CD4-positive, alpha-beta T cell (primary cell): ENCODE measurements at regions of chr15 and their contacts with region 1.

Region 1: DNA sequence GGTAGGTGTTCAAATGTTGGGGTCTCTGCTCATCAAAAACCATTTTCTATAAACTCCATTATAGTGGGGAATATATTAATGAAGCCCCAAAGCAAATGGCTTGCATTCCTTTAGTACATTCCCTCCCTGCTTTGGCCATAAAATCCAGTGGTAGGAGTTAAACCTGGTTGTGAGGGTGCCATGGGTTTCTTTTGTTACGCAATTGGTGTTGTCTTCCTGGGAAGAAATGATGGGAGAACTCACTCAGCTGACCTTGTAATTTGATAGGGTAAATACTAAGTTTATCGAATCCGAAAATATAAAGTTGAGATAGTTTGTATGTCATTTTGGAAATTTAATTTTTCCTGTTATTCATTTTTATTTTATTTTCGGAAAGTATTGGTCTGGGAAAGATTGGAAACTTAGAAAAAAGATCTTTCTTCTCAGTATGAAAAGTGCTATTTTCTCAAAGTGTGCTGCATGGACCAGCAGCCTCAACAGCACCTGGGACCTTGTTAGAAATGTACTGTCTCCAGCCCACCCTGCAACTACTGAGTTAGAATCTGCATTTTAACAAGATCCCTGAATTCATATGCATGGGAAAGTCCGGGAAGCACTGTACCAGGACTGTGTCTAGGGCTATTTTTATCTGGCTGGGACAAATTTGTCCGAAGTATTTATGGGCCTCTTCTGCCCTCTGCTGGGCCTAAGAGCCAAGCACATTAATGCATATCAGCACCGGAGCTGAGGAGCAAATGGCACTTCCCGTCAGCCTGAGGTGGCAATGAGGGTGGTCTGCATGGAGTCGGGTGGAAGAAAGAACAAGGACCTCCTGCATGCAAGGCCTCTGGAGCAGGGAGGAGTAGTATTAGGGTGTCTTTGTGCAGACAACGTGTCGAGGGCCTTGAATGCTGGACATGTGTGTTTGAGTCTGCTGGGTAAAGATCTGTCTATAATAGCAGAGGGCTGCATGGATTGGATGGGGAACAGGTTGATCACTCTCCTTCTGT is 54.7 kb downstream of the FAM81A start:
- DNase-seq: peak; percentile 30 to 79 (median 42)
- ATAC-seq: peak; percentile 79
- H3K4me3 ChIP-seq: no peak overlapping the region
- H3K4me3 Mint-ChIP-seq: no peak overlapping the region
- H3K27ac ChIP-seq: no peak overlapping the region
- H3K27ac Mint-ChIP-seq: no peak overlapping the region
- H3K4me1 ChIP-seq: peaks cover 5% of the 10 kb centered on the region
- H3K4me1 Mint-ChIP-seq: no peaks in the 10 kb centered on the region
- H3K27me3 ChIP-seq: no peaks in the 10 kb centered on the region
- H3K27me3 Mint-ChIP-seq: no peaks in the 10 kb centered on the region
- CTCF ChIP-seq: peak; percentile 95

Region 2: DNA sequence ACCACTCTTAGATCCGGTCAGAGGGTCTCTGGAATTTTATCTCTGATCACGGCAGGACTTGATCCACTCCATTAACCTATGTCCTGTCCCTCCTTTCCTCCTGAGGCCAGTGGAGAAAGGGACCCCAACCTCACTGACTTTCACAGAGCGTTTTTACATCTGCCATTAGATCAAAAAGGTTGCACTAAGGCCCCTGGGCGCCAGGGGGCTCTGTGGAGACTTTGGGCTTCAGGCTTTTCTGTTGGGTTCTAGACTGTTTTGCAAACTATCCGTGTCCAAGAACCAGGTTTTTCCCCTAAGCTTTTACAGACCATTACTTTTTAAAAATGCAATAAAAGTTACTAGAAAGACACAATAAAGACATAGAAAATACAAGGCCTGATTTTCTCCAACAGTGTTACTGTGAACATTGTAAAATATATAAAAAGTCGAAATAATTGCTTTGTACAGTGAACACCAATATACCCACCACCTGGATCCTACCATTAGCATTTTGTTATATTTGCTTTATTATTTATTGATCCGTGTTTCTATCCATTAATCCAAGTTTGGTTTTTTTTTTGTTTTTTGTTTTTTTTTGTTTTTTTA is 1626.4 kb before region 1 on chr15:
- CTCF ChIA-PET with region 1: no interaction called
- POLR2A ChIA-PET with region 1: no interaction called
- intact Hi-C with region 1: loop called in 1 of 2 experiments (anchors 10 kb)
- DNase-seq: peak in 13 of 14 experiments; percentile 11 to 57 (median 27)
- ATAC-seq: no peak
- H3K4me3 ChIP-seq: no peak overlapping the region
- H3K4me3 Mint-ChIP-seq: no peak overlapping the region
- H3K27ac ChIP-seq: no peak overlapping the region
- H3K27ac Mint-ChIP-seq: no peak overlapping the region
- H3K4me1 ChIP-seq: peaks cover 5% of the 10 kb centered on the region
- H3K4me1 Mint-ChIP-seq: no peaks in the 10 kb centered on the region
- H3K27me3 ChIP-seq: peaks cover 13 to 26% of the 10 kb centered on the region in 2 experiments
- H3K27me3 Mint-ChIP-seq: peaks cover 53% of the 10 kb centered on the region
- CTCF ChIP-seq: peak; percentile 68

Region 3: GRCh38 chr15:58227706-58228543 is 1264.8 kb before region 1 on chr15:
- CTCF ChIA-PET with region 1: interaction called, 5 read pairs
- POLR2A ChIA-PET with region 1: no interaction called
- intact Hi-C with region 1: loop called (anchors 1 to 2 kb)
- DNase-seq: peak; percentile 41 to 80 (median 56)
- ATAC-seq: peak; percentile 43
- H3K4me3 ChIP-seq: no peak overlapping the region
- H3K4me3 Mint-ChIP-seq: no peak overlapping the region
- H3K27ac ChIP-seq: no peak overlapping the region
- H3K27ac Mint-ChIP-seq: no peak overlapping the region
- H3K4me1 ChIP-seq: peaks cover 5% of the 10 kb centered on the region
- H3K4me1 Mint-ChIP-seq: peaks cover 15% of the 10 kb centered on the region
- H3K27me3 ChIP-seq: no peaks in the 10 kb centered on the region
- H3K27me3 Mint-ChIP-seq: no peaks in the 10 kb centered on the region
- CTCF ChIP-seq: peak; percentile 87

Region 4: DNA sequence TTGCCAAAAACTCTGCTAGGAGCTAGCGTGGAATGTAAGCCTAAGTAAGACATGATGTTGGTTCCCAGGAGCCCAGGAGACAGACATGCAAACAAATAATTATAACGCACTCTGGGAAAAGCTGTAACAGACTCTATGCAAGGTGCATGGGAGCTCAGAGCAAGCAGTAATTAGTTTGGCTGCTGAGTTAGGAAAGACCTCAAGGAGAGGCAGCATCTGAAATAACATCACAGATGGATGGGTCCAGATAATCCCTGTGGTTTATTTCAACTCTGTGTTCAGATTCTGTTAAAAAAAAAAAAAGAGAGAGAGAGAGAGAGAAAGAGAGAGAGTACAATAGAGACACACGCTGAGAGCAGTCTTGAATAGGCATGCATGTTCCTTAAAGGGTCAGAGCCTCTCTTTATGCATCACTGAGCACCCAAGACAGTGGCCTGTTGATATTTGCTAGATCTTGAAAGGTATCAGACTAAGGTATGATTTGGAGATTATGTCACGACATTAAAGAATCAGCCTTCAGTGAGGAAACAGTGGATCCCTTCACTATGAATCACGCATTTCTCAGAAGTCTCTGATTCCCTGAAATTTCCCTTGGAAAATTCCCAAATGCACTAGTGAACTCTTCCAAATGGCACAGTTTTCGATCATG is 1185.2 kb before region 1 on chr15:
- CTCF ChIA-PET with region 1: no interaction called
- POLR2A ChIA-PET with region 1: no interaction called
- intact Hi-C with region 1: no loop called
- DNase-seq: no peak
- ATAC-seq: no peak
- H3K4me3 ChIP-seq: no peak overlapping the region
- H3K4me3 Mint-ChIP-seq: no peak overlapping the region
- H3K27ac ChIP-seq: no peak overlapping the region
- H3K27ac Mint-ChIP-seq: no peak overlapping the region
- H3K4me1 ChIP-seq: no peaks in the 10 kb centered on the region
- H3K4me1 Mint-ChIP-seq: peaks cover 25% of the 10 kb centered on the region
- H3K27me3 ChIP-seq: no peaks in the 10 kb centered on the region
- H3K27me3 Mint-ChIP-seq: no peaks in the 10 kb centered on the region
- CTCF ChIP-seq: no peak

Region 5: DNA sequence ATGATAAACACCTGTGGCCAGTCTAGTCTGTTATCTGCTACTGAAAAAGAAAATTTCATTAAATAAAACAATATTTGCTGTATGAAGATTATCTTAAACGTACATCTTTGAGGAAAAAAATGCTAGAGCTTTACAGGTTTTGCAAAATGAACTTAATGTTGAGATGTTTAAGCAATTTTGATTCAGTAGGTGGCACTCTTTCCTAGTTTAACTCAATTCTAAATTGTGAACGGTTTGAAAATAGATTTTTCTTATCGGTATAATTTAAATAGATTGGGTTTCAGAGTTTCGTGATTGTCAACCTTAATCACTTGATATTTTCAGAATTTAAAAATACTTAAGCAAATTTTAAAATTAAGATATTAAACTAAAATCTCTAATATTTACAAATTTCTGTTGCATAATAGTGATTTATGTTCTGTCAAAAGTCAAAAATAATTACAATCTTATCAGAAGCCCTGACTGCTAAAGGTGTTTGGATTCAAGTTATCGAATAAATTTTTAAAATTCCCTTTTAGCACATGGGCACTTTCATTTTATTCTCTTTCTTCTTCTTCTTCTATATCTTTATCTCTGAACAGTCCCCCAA is 512.2 kb before region 1 on chr15:
- CTCF ChIA-PET with region 1: interaction called, 6 read pairs
- POLR2A ChIA-PET with region 1: no interaction called
- intact Hi-C with region 1: loop called (anchors 1 kb)
- DNase-seq: peak in 3 of 14 experiments; percentile 66 to 72 (median 70)
- ATAC-seq: peak; percentile 50
- H3K4me3 ChIP-seq: no peak overlapping the region
- H3K4me3 Mint-ChIP-seq: no peak overlapping the region
- H3K27ac ChIP-seq: no peak overlapping the region
- H3K27ac Mint-ChIP-seq: no peak overlapping the region
- H3K4me1 ChIP-seq: peaks cover 18% of the 10 kb centered on the region
- H3K4me1 Mint-ChIP-seq: peaks cover 32% of the 10 kb centered on the region
- H3K27me3 ChIP-seq: no peaks in the 10 kb centered on the region
- H3K27me3 Mint-ChIP-seq: no peaks in the 10 kb centered on the region
- CTCF ChIP-seq: peak; percentile 78

Region 6: GRCh38 chr15:59247364-59247763 is 245.3 kb before region 1 on chr15:
- CTCF ChIA-PET with region 1: no interaction called
- POLR2A ChIA-PET with region 1: no interaction called
- intact Hi-C with region 1: loop called (anchors 1 to 2 kb)
- DNase-seq: peak in 13 of 14 experiments; percentile 8 to 69 (median 27)
- ATAC-seq: peak; percentile 58
- H3K4me3 ChIP-seq: no peak overlapping the region
- H3K4me3 Mint-ChIP-seq: no peak overlapping the region
- H3K27ac ChIP-seq: no peak overlapping the region
- H3K27ac Mint-ChIP-seq: no peak overlapping the region
- H3K4me1 ChIP-seq: peaks cover 2% of the 10 kb centered on the region
- H3K4me1 Mint-ChIP-seq: no peaks in the 10 kb centered on the region
- H3K27me3 ChIP-seq: no peaks in the 10 kb centered on the region
- H3K27me3 Mint-ChIP-seq: no peaks in the 10 kb centered on the region
- CTCF ChIP-seq: peak; percentile 37

Region 7: GRCh38 chr15:59420986-59421618 is 71.6 kb before region 1 on chr15:
- CTCF ChIA-PET with region 1: no interaction called
- POLR2A ChIA-PET with region 1: no interaction called
- intact Hi-C with region 1: no loop called
- DNase-seq: no peak
- ATAC-seq: no peak
- H3K4me3 ChIP-seq: no peak overlapping the region
- H3K4me3 Mint-ChIP-seq: no peak overlapping the region
- H3K27ac ChIP-seq: no peak overlapping the region
- H3K27ac Mint-ChIP-seq: no peak overlapping the region
- H3K4me1 ChIP-seq: no peaks in the 10 kb centered on the region
- H3K4me1 Mint-ChIP-seq: no peaks in the 10 kb centered on the region
- H3K27me3 ChIP-seq: peaks cover 0 to 3% of the 10 kb centered on the region in 2 experiments
- H3K27me3 Mint-ChIP-seq: peaks cover 19% of the 10 kb centered on the region
- CTCF ChIP-seq: no peak

Region 8: DNA sequence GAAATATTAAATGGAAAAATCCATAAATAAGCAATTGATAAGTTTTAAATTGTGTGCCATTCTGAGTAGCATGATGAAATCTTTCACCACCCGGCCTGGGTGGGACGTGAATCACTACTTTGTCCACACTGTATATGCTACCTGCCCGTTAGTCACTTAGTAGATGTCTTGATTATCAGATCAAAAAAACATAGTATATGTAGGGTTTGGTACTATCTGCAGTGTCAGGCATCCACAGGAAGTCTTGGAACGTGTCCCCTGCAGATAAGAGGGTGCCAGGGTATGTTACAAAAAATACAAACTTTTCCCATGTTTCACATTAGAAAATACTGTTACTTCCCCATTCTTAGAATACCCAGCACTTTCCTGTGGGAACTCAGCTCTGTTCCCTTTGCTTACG is 19.5 kb before region 1 on chr15:
- CTCF ChIA-PET with region 1: no interaction called
- POLR2A ChIA-PET with region 1: no interaction called
- intact Hi-C with region 1: no loop called
- DNase-seq: no peak
- ATAC-seq: no peak
- H3K4me3 ChIP-seq: no peak overlapping the region
- H3K4me3 Mint-ChIP-seq: no peak overlapping the region
- H3K27ac ChIP-seq: no peak overlapping the region
- H3K27ac Mint-ChIP-seq: no peak overlapping the region
- H3K4me1 ChIP-seq: no peaks in the 10 kb centered on the region
- H3K4me1 Mint-ChIP-seq: no peaks in the 10 kb centered on the region
- H3K27me3 ChIP-seq: no peaks in the 10 kb centered on the region
- H3K27me3 Mint-ChIP-seq: peaks cover 46% of the 10 kb centered on the region
- CTCF ChIP-seq: no peak

Region 9: GRCh38 chr15:59644756-59645155 is 152.1 kb after region 1 on chr15:
- CTCF ChIA-PET with region 1: no interaction called
- POLR2A ChIA-PET with region 1: no interaction called
- intact Hi-C with region 1: no loop called
- DNase-seq: no peak
- ATAC-seq: no peak
- H3K4me3 ChIP-seq: no peak overlapping the region
- H3K4me3 Mint-ChIP-seq: no peak overlapping the region
- H3K27ac ChIP-seq: no peak overlapping the region
- H3K27ac Mint-ChIP-seq: peak overlapping the region; percentile 2
- H3K4me1 ChIP-seq: no peaks in the 10 kb centered on the region
- H3K4me1 Mint-ChIP-seq: peaks cover 8% of the 10 kb centered on the region
- H3K27me3 ChIP-seq: no peaks in the 10 kb centered on the region
- H3K27me3 Mint-ChIP-seq: no peaks in the 10 kb centered on the region
- CTCF ChIP-seq: no peak